ENCODE measurements at regions of chr19 and their contacts with region 1.

Region 1: DNA sequence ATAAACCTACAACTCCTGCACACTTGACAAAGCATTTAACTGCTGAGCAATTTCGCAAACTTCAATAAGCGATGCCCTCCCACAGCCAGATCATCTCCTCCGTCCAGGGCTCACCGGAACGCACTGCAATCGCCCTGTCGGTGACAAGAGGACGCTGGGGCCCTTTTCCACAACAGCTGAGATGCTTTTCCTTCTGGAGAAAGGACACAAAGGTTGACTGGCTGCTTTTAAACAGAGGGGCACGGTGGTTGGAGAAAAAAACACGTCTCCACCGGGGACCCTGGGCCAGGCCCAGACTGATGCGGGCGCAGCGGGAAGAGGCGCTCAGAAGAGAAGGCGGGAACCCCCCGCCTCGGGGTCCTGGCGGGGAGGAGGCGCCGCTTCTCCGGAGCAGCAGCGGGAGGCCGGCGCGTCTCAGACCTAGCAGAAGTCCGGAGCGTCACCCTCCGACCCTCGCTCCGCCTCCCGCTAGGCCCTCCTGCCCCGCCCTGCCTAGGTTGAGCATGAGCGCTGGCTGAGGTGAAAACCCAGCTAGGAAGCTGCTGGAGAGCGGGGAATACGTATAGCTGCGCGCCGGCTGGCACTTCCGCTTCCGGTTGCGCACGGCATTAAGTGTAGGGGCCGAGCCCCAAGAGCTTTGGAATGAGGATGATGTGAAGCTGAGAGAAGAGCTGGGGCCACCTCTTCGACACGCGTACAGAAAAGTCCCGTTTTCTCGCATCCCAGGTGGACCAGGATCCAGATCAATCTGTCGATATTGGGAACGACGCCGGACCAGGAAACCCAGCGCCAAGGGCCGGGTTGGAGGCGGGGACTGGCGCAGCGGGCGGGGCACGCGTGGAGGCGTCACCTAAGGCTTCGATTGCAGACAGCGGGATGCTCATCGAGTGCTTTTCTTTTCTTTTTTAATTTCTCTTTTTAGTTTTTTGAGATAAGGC is at the start of gene ZNF846:
- DNase-seq: peak; percentile 87 to 96
- ATAC-seq: peak; percentile 91 to 97 (median 93)
- H3K4me3 ChIP-seq: peak within 1 kb of the TSS; percentile 91
- H3K4me3 Mint-ChIP-seq: peak within 1 kb of the TSS; percentile 96
- H3K27ac ChIP-seq: peak within 1 kb of the TSS; percentile 92
- H3K27ac Mint-ChIP-seq: peak within 1 kb of the TSS; percentile 96 to 97
- H3K4me1 ChIP-seq: peaks cover 16% of the 10 kb centered on the region
- H3K4me1 Mint-ChIP-seq: peaks cover 5% of the 10 kb centered on the region in 2 donors
- H3K27me3 ChIP-seq: no peaks in the 10 kb centered on the region
- H3K27me3 Mint-ChIP-seq: no peaks in the 10 kb centered on the region
- CTCF ChIP-seq: no peak
- total RNA-seq, gene ZNF846: 9.8 to 15.6 (median 12.8) TPM

Region 2: GRCh38 chr19:9674663-9675357 is 93.6 kb before region 1 on chr19 and contains the start of gene ZNF562:
- intact Hi-C with region 1: loop called (anchors 1 kb)
- DNase-seq: peak; percentile 79 to 88
- ATAC-seq: peak; percentile 91 to 92 (median 92)
- H3K4me3 ChIP-seq: peak within 1 kb of the TSS; percentile 91
- H3K4me3 Mint-ChIP-seq: peak within 1 kb of the TSS; percentile 99
- H3K27ac ChIP-seq: peak within 1 kb of the TSS; percentile 95
- H3K27ac Mint-ChIP-seq: peak within 1 kb of the TSS; percentile 96 to 100
- H3K4me1 ChIP-seq: peaks cover 11% of the 10 kb centered on the region
- H3K4me1 Mint-ChIP-seq: peaks cover 36 to 40% of the 10 kb centered on the region in 2 donors
- H3K27me3 ChIP-seq: no peaks in the 10 kb centered on the region
- H3K27me3 Mint-ChIP-seq: no peaks in the 10 kb centered on the region
- CTCF ChIP-seq: no peak
- total RNA-seq, gene ZNF562: 21.6 to 25.3 (median 23.1) TPM

Region 3: GRCh38 chr19:9785367-9786331 is 17.2 kb after region 1 on chr19:
- intact Hi-C with region 1: loop called (anchors 1 kb)
- DNase-seq: peak; percentile 86 to 98
- ATAC-seq: peak; percentile 81 to 93 (median 81)
- H3K4me3 ChIP-seq: peak overlapping the region; percentile 86
- H3K4me3 Mint-ChIP-seq: peak overlapping the region; percentile 93
- H3K27ac ChIP-seq: peak overlapping the region; percentile 98
- H3K27ac Mint-ChIP-seq: peak overlapping the region; percentile 93 to 95
- H3K4me1 ChIP-seq: peaks cover 14% of the 10 kb centered on the region
- H3K4me1 Mint-ChIP-seq: peaks cover 7 to 36% of the 10 kb centered on the region in 2 donors
- H3K27me3 ChIP-seq: no peaks in the 10 kb centered on the region
- H3K27me3 Mint-ChIP-seq: no peaks in the 10 kb centered on the region
- CTCF ChIP-seq: no peak